ENCODE measurements at regions of chr20 and their contacts with region 1.

Region 1: GRCh38 chr20:34363062-34363464 is at the start of gene ITCH:
- DNase-seq: peak; percentile 91
- H3K4me3 Mint-ChIP-seq: peak within 1 kb of the TSS; percentile 100
- H3K27ac Mint-ChIP-seq: peak within 1 kb of the TSS; percentile 100
- H3K4me1 Mint-ChIP-seq: peaks cover 26% of the 10 kb centered on the region
- H3K27me3 Mint-ChIP-seq: no peaks in the 10 kb centered on the region
- total RNA-seq, gene ITCH: 55.6 and 66.4 TPM in 2 replicates

Region 2: GRCh38 chr20:34302723-34303528 is 60.1 kb before region 1 on chr20 and contains the start of gene AHCY:
- intact Hi-C with region 1: loop called (anchors 1 kb)
- DNase-seq: peak; percentile 93
- H3K4me3 Mint-ChIP-seq: peak within 1 kb of the TSS; percentile 83
- H3K27ac Mint-ChIP-seq: peak within 1 kb of the TSS; percentile 92
- H3K4me1 Mint-ChIP-seq: peaks cover 19% of the 10 kb centered on the region
- H3K27me3 Mint-ChIP-seq: no peaks in the 10 kb centered on the region
- total RNA-seq, gene AHCY: 130 and 132 TPM in 2 replicates

Region 3: DNA sequence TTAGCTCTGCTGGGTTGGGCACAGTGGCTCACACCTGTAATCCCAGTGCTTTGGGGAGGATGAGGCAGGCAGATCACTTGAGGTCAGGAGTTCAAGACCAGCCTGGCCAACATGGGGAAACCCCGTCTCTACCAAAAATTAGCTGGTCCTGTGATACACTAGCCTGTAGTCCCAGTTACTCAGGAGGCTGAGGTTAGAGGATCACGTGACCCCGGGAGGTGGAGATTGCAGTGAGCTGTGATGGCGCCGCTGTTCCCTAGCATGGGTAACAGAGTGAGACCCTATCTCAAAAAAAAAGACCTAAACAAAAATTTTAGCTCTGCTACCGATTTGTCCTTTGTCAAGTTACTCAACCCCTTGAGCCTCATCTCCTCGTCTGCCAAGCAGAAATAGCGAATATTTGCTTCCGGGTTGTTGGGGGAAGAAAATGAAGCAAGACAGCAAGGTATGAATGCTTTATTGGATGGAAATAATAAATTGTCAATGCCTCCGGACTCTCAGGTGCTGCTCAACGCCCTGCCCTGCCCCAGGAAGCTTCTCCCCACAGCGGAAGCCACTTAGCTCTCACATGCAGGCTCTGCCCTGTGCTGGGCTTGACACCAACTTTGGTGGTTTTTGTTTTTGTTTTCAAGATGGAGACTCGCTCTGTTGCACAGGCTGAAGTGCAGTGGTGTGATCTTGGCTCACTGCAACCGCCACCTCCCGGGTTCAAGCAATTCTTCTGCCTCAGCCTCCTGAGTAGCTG is 24.9 kb before region 1 on chr20:
- intact Hi-C with region 1: no loop called
- DNase-seq: no peak
- H3K4me3 Mint-ChIP-seq: no peak overlapping the region
- H3K27ac Mint-ChIP-seq: no peak overlapping the region
- H3K4me1 Mint-ChIP-seq: no peaks in the 10 kb centered on the region
- H3K27me3 Mint-ChIP-seq: no peaks in the 10 kb centered on the region

Region 4: GRCh38 chr20:34407962-34408474 is 45.0 kb after region 1 on chr20:
- intact Hi-C with region 1: loop called (anchors 5 kb)
- DNase-seq: no peak
- H3K4me3 Mint-ChIP-seq: no peak overlapping the region
- H3K27ac Mint-ChIP-seq: no peak overlapping the region
- H3K4me1 Mint-ChIP-seq: peaks cover 20% of the 10 kb centered on the region
- H3K27me3 Mint-ChIP-seq: no peaks in the 10 kb centered on the region

Region 5: GRCh38 chr20:34558320-34559218 is 195.5 kb after region 1 on chr20 and contains the start of gene MAP1LC3A:
- intact Hi-C with region 1: loop called (anchors 1 kb)
- DNase-seq: peak; percentile 92
- H3K4me3 Mint-ChIP-seq: peak within 1 kb of the TSS; percentile 83
- H3K27ac Mint-ChIP-seq: peak within 1 kb of the TSS; percentile 78
- H3K4me1 Mint-ChIP-seq: peaks cover 12% of the 10 kb centered on the region
- H3K27me3 Mint-ChIP-seq: no peaks in the 10 kb centered on the region
- total RNA-seq, gene MAP1LC3A: 6.1 and 7.3 TPM in 2 replicates

Measured in activated T-helper 1 cell treated with anti-CD3 and anti-CD28 coated beads, Interleukin-12 subunit alpha, Interleukin-12 subunit beta, Interleukin-2, Interleukin-4 antibody, amounts not matched to agents 30 ng/mL and 10 ng/mL and 1 ng/mL, durations not matched to agents 14 hours and 24 hours and 36 hours (primary cell).